ENCODE measurements at regions of chrX and their contacts with region 1.

Region 1: DNA sequence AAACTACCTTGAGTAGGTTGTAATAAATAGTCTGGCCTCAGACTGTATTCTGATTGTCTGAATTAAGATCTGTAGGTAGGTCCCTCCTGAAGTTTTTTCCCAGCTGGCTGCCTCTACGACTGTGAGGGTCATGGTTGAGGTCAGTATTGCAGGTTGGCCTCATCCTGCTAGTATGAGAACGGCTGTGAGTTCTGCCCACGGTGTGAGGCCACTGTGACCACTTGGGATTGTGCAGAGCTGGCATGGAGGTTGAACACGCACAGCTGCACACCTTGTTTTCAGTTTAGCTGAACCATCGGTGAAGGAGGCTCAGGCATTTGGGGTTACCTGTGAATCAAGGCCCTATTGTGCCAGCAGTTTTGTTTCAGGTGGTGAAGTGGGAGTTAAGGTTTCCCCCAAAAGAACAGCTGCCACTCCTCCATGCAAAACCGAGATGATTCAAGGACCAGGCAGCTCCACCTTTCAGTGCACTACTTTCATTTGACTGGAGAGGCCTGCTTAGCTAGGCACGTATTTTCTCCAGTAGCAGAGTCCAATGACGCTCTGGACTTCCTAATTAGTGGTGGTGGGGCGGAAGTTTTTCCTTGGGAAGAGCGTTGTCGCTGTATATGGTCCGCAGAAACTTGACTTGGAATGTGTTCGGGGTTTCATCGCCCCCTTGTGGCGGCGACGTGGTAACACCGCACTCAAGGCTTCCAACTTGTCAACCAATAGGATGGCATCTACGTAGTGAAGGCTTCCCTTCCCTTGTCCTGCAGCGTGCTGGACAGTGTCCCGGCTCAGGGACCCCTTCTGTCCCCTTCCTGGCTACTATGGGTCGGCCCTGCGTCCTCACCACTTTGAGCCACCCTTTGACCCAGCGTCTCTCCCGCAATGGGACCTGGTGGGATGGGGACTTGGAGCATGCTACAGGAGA is 13.8 kb downstream of the CMC4 start:
- DNase-seq: peak; percentile 58
- H3K4me3 Mint-ChIP-seq: peak overlapping the region; percentile 31
- H3K27ac Mint-ChIP-seq: peak overlapping the region; percentile 64
- H3K4me1 Mint-ChIP-seq: peaks cover 29% of the 10 kb centered on the region
- H3K27me3 Mint-ChIP-seq: no peaks in the 10 kb centered on the region

Region 2: DNA sequence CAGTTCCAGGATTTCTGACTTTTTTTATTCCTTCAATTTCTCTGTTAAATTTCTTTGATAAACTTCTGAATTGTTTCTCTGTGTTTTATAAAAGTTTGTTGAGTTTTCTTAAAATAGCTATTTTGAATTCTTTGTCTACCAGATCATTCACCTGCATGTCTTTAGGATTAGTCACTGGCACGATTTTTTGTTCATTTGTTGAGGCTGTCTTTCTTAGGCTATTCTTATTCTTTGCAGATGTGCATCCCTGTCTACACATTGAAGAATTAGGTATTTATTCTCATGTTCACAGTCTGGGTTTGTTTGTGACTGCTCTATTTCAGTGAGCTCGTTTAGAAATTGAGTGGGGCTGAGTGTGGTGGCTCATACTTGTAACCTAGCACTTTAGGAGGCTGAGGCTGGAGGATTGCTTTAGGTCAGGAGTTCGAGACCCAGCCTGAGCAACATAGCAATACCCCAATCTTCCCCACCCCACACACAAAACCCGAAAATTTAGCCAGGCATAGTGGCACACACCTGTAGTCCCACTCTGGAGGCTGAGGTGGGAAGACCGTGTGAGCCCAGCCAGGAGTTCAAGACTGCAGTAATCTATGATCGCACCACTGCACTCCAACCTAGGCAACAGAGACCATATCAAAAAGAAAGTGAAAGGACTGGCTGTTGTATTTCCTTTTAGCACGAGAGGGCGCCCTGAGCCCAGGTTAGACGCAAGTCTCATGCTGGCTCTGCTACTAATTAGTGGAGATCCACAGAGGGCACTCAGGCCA is 76.6 kb before region 1 on chrX:
- CTCF ChIA-PET with region 1: interaction called, 14 read pairs
- DNase-seq: peak; percentile 84
- H3K4me3 Mint-ChIP-seq: peak overlapping the region; percentile 54
- H3K27ac Mint-ChIP-seq: peak overlapping the region; percentile 86
- H3K4me1 Mint-ChIP-seq: peaks cover 27% of the 10 kb centered on the region
- H3K27me3 Mint-ChIP-seq: no peaks in the 10 kb centered on the region

Region 3: GRCh38 chrX:154986826-154987576 is 70.1 kb before region 1 on chrX:
- CTCF ChIA-PET with region 1: interaction called, 14 read pairs
- DNase-seq: no peak
- H3K4me3 Mint-ChIP-seq: no peak overlapping the region
- H3K27ac Mint-ChIP-seq: no peak overlapping the region
- H3K4me1 Mint-ChIP-seq: no peaks in the 10 kb centered on the region
- H3K27me3 Mint-ChIP-seq: peaks cover 4% of the 10 kb centered on the region